ENCODE measurements at regions of chr10 and their contacts with region 1.

Region 1: DNA sequence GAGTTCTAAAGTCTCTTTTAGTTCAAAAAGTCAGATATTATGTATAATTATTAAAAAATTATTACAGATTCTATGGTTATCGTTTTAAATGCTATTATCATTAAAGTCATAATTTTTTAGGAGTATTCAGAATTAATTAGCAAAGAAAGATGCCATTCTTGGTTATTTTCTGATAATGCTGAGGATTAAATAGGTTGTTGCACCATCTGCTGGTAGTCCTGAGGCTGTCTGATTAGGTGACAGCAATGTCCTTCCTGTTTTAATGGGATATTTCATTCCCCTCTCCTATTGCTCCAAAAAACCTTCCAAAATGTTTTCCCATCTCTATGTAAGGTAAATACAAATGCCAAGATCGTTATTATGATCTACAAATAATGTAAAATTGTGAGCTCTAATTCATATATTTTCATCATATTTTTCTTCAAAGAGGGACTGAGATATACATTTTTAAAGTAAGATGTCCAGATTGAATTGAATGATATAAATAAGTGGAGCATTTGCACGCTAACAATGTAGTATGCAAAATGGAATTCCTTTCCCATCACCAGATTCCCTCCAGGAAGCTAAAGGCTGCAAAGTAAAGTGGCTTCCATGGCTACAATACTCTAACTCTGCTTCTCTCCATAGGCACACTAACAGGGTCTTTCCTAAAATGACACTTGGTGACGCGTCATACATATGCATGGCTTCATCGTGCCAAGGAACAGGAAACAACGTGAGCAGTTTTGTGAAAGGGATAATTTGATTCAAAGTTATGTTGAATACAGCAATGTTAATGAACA is 58.8 kb upstream of the AKR1E2 start:
- DNase-seq: no peak
- ATAC-seq: no peak
- H3K4me3 Mint-ChIP-seq: no peak overlapping the region
- H3K27ac Mint-ChIP-seq: no peak overlapping the region
- H3K4me1 Mint-ChIP-seq: peaks cover 3% of the 10 kb centered on the region
- H3K27me3 Mint-ChIP-seq: peaks cover 17% of the 10 kb centered on the region

Region 2: GRCh38 chr10:3197348-3198003 is 1569.7 kb before region 1 on chr10:
- CTCF ChIA-PET with region 1: interaction called, 3 read pairs
- POLR2A ChIA-PET with region 1: no interaction called
- intact Hi-C with region 1: loop called (anchors 2 kb)
- DNase-seq: peak; percentile 92
- ATAC-seq: peak; percentile 90
- H3K4me3 Mint-ChIP-seq: no peak overlapping the region
- H3K27ac Mint-ChIP-seq: no peak overlapping the region
- H3K4me1 Mint-ChIP-seq: peaks cover 11% of the 10 kb centered on the region
- H3K27me3 Mint-ChIP-seq: peaks cover 60% of the 10 kb centered on the region

Region 3: DNA sequence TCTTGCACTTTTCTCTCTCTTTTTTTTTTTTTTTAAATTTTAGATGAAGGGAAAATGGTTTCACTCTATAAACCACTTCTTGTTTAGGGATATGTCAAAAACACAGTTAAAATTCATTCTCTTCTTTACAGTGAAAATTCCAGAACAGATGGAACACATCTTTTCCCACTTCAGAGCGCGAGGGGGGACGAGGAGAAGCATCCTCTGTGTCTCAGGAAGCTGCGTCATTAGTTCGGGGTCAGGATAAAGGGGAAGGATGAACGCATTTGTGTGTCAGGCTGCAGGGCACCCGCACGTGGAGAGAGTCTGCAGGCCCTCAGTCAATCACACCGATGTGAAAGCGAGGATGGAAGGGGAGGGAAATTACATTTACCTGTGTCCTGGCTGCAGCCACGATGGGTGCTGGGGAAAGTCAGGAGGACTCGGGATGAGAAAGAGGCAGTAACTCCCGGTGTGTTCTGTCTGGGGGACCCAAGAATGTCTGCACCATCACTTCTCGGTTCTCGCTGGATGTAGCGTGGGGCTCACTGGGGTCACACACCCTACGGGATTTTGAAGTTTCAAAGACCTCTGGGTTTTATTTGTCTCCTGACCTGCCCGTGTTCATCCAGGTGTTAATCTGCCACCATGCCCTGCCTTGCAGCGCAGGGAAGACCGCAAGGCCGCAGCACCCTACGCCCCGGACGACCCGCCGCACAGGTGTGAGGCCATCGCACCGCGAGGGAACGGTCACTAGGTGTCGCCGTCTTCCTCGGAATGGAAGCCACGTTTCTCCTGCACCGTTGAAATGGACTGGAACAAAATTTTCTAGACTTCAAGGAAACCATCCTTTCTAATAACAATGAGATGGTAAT is 1527.9 kb before region 1 on chr10:
- CTCF ChIA-PET with region 1: interaction called, 3 read pairs
- POLR2A ChIA-PET with region 1: no interaction called
- intact Hi-C with region 1: loop called (anchors 1 to 5 kb)
- DNase-seq: peak; percentile 85
- ATAC-seq: peak; percentile 93
- H3K4me3 Mint-ChIP-seq: no peak overlapping the region
- H3K27ac Mint-ChIP-seq: no peak overlapping the region
- H3K4me1 Mint-ChIP-seq: peaks cover 2% of the 10 kb centered on the region
- H3K27me3 Mint-ChIP-seq: peaks cover 23% of the 10 kb centered on the region

Region 4: GRCh38 chr10:4678023-4678950 is 88.9 kb before region 1 on chr10:
- CTCF ChIA-PET with region 1: no interaction called
- POLR2A ChIA-PET with region 1: no interaction called
- intact Hi-C with region 1: no loop called
- DNase-seq: no peak
- ATAC-seq: no peak
- H3K4me3 Mint-ChIP-seq: no peak overlapping the region
- H3K27ac Mint-ChIP-seq: no peak overlapping the region
- H3K4me1 Mint-ChIP-seq: no peaks in the 10 kb centered on the region
- H3K27me3 Mint-ChIP-seq: peaks cover 18% of the 10 kb centered on the region

Measured in activated CD4-positive, alpha-beta T cell treated with anti-CD3 and anti-CD28 coated beads for 36 hours (primary cell).